AG04449 (cell line): ENCODE measurements at regions of chr1 and their contacts with region 1.

Region 1: DNA sequence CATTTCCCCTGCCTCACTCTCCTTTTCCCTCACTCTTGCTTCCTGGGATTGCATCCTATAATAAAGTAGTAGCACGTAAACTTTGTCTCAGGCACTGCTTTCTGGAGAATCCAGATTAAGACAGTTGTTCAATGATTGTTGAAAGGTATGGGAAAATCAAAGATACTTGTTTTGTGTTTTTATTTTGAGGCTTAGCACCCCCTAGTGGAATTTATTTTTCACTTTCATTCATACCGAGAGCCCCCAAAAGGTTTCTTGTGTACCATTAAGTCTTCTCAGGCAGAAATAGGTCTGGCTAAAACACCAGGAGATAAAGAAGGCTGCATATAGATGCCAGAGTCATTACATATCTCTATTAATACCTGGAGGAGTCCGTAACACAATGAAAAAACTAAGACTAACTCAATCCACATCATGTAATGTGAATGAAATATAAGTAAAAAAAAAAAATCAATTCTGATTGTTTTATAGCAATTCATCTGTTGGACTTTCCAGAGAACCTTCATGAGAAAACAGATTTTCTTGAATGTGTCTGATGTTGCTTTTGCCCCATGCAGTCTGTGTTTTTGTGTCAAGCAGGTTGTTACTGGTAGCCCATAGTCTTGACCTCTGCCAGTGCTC is 103.5 kb downstream of the RPE65 start:
- DNase-seq: no peak
- H3K4me3 ChIP-seq: no peak overlapping the region
- CTCF ChIP-seq: peak; percentile 10

Region 2: DNA sequence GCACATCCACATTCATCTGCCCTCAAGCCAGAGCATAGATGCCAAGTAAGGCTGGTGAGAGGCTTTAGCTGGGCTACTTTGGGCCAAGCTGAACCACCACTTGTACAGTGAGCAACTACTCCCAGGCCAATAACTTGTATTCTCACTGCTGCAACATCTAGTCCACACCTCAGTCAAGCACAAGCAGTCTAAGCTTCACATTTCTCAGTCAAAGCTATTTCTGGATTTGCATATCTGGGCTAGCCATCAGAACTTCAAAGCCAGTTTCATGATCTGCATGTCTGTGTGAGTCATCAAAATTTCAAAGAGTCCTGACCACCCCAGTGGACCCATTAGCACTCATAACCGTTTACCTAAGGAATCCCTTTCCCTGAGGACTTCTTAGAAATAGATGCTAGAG is 218.1 kb before region 1 on chr1:
- CTCF ChIA-PET with region 1: interaction called, 964 read pairs
- POLR2A ChIA-PET with region 1: no interaction called
- DNase-seq: no peak
- H3K4me3 ChIP-seq: no peak overlapping the region
- CTCF ChIP-seq: no peak

Region 3: DNA sequence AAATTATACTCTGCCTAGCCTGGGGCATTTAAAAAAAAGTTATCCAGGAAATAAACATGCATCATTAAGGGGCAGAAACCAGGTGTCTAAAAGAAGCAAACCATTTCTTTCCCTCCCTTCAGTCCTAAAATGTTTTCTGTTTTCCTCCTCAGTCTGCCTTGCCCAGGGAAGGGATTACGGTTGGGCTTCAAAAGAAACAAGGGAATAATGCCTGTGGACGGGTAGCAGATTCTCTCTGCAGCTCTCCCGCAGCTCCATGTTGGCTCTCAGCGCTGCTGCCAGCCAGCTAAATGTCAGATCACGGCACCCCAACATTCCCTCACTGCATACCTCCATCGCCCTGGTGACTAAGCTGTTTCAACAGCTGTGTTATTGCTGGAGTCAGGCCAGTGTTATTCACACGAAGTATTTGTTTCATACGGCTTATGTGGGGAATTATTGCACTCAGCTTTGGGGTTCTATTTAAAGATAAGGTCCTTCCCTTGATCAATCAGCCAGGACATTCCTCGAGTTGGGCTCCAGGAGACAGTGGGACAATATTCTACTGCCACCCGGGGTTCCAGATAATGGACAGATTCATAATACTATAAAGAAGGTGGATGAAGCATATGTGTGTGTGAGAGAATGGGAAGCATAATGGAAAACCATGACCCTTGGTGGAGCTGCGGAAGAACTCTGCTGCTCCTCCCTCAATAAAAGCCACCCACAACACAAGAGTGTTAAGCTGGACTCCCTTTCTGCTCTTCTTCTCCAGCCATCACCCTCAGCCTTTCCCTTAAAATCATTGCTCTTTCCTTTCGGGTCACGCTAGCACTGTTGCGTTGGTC is 172.2 kb before region 1 on chr1:
- CTCF ChIA-PET with region 1: interaction called, 12 read pairs
- POLR2A ChIA-PET with region 1: no interaction called
- DNase-seq: peak; percentile 88
- H3K4me3 ChIP-seq: no peak overlapping the region; the same call in 1 of the 2 replicates
- CTCF ChIP-seq: no peak

Region 4: GRCh38 chr1:68321084-68321685 is 25.1 kb before region 1 on chr1:
- CTCF ChIA-PET with region 1: interaction called, 10 read pairs
- POLR2A ChIA-PET with region 1: no interaction called
- DNase-seq: no peak
- H3K4me3 ChIP-seq: no peak overlapping the region
- CTCF ChIP-seq: peak; percentile 68

Region 5: DNA sequence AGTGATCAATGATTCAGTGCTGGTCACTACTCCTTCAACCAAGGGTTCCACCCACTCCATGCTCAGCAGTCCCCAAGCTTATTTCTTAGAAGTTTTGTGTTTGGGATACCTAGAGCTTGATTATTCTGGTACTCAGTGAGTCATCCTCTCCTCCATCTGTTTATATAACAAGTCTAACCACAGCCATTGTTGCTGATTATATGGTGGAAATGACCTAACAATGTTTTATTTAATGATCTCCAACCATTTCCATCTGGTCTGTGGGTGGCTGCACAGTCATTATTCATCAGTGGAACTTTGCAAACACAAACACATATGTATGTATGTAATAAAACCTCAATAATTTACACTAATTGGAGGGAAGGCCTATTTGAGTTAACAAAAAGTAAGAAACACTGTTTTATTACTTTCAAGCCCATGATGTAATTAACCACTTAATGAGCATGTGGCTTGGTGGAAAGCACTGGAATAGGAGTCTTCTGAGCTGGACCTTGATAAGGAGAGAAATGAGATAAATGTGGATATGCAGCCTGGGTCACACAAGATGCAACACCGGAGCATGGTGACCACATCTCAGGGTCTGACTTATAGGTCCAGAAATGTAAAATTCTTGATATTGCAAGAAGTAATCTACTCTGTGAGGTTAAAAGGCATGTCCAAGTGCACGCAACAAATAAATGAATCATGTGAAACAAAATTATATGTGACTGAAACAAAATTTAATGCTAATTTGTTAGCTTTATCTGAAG is 15.0 kb before region 1 on chr1:
- CTCF ChIA-PET with region 1: interaction called, 25 read pairs
- POLR2A ChIA-PET with region 1: no interaction called
- DNase-seq: peak; percentile 62
- H3K4me3 ChIP-seq: no peak overlapping the region
- CTCF ChIP-seq: no peak

Region 6: GRCh38 chr1:68358439-68358838 is 12.1 kb after region 1 on chr1:
- CTCF ChIA-PET with region 1: interaction called, 17 read pairs
- POLR2A ChIA-PET with region 1: no interaction called
- DNase-seq: no peak
- H3K4me3 ChIP-seq: no peak overlapping the region
- CTCF ChIP-seq: no peak

Region 7: GRCh38 chr1:68442822-68443556 is 96.7 kb after region 1 on chr1:
- CTCF ChIA-PET with region 1: interaction called, 17 read pairs
- POLR2A ChIA-PET with region 1: no interaction called
- DNase-seq: peak; percentile 9
- H3K4me3 ChIP-seq: no peak overlapping the region
- CTCF ChIP-seq: peak; percentile 61